ENCODE measurements at regions of chr5 and their contacts with region 1.

Region 1: DNA sequence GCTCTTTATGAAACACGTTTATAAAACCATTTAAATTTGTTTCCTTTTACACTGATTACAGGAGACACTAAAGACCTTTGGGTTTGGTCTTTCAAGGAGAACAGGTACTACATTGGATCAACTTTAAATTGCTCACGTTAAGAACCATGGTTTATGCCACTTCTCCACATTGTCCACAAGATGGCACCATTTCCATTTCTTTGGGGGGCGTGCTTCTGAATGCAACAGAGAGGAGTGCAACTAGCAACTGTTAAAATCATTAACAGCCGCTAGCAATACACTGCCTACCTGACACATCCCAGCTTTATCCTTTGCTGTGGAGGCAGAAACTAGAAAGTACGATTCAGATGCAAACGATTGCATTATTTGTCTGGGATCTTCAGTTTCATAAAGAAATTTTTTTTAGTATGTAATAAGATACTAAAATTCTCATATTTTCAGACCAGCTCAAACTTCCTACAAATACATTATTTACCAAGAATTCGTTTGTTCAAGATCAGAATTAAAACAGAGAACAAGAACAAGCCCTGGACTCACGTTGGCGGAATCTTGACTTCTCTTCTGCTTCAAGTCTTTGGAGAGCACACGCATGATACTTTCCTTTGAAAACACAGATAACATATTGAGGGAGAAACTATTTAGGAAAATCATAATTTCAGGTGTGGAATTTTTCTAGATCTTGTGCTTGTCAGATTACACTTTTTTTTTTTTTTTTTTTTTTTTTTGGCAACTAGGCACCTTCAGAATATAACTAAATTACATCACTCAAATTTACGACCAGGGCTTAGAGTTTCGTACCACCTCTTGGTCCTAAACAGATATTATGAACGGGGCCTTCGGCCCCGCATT is 702 bp downstream of the CDC20B start:
- DNase-seq: peak in 8 of 9 donors; percentile 53 to 81 (median 75)
- ATAC-seq: peak; percentile 80
- H3K4me3 ChIP-seq: peak overlapping the region; percentile 42
- H3K4me3 Mint-ChIP-seq: peak overlapping the region; percentile 78 to 93 (median 86)
- H3K27ac ChIP-seq: no peak overlapping the region
- H3K27ac Mint-ChIP-seq: peak overlapping the region in 4 of 9 donors; percentile 4 to 83 (median 57)
- H3K4me1 ChIP-seq: peaks cover 14 to 25% of the 10 kb centered on the region in 2 donors
- H3K4me1 Mint-ChIP-seq: peaks cover 23 to 45% (median 35%) of the 10 kb centered on the region in 7 donors
- H3K27me3 ChIP-seq: peaks cover 25 to 42% of the 10 kb centered on the region in 2 donors
- H3K27me3 Mint-ChIP-seq: peaks cover 73 to 88% (median 78%) of the 10 kb centered on the region in 5 donors

Region 2: DNA sequence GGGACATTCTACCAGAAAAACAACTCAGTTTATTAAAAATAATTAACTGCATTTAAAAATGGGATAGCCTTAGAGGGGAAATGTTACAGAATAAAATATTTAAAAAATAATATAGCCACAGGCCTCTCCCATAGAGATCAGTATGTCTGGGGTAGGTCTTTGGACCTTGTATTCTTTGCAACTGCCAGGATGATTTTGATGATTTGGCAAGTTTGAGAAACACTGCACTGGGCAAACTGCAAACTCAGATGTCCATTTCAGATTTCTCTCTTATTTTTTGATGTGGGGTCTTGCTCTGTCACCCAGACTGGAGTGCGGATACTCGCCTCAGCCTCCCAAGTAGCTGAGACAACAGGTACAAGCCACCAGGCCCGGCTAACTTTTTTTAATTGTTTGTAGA is 86.1 kb after region 1 on chr5:
- CTCF ChIA-PET with region 1: no interaction called
- POLR2A ChIA-PET with region 1: no interaction called
- intact Hi-C with region 1: loop called in 1 of 2 experiments (anchors 2 kb)
- DNase-seq: no peak
- ATAC-seq: no peak
- H3K4me3 ChIP-seq: no peak overlapping the region
- H3K4me3 Mint-ChIP-seq: no peak overlapping the region
- H3K27ac ChIP-seq: no peak overlapping the region
- H3K27ac Mint-ChIP-seq: no peak overlapping the region
- H3K4me1 ChIP-seq: no peaks in the 10 kb centered on the region
- H3K4me1 Mint-ChIP-seq: no peaks in the 10 kb centered on the region
- H3K27me3 ChIP-seq: no peaks in the 10 kb centered on the region
- H3K27me3 Mint-ChIP-seq: no peaks in the 10 kb centered on the region

Region 3: DNA sequence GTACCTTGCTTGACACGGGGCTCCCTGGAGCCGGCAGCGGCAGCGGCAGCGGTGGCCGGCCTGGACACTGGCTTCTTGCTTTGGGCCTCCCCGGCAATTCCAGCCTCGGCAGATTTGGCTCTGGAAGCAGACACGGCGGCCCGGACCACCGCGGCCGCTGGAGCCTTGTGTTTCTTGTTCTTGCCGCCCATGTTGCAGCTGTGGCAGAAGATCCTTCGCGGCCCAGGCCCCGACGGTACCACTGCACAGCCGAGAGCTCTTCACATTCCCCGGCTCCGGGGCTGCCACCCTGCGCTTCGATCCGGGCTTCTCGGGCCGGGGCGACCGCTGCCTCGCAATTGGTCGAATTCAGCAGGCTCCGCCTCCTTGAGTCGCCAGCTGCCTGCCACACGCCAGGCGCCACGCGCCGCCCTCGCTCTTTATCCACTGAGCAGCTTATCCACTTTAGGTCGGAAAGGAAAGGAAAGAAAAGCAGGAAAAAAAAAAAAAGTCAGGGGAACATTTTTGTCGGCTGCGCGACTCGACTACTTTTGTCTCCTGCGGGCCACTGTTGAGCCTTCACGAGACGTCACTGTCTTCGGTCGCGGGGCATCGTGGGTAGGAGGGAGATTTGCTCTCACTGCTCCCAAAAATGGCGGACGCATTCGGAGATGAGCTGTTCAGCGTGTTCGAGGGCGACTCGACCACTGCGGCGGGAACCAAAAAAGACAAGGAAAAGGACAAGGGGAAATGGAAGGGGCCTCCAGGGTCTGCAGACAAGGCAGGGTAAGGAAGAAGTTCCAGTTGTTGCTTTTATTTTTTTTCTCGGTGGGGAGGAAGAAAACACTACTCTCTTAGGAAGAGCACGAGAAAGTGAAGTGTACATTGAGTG is 135.3 kb after region 1 on chr5 and contains the starts of genes DHX29 and MTREX:
- CTCF ChIA-PET with region 1: interaction called, 7 read pairs
- POLR2A ChIA-PET with region 1: no interaction called
- intact Hi-C with region 1: loop called (anchors 1 kb)
- DNase-seq: peak; percentile 85 to 93 (median 91)
- ATAC-seq: peak; percentile 94
- H3K4me3 ChIP-seq: peak within 1 kb of the TSS; percentile 97
- H3K4me3 Mint-ChIP-seq: no peak within 1 kb of the TSS
- H3K27ac ChIP-seq: peak within 1 kb of the TSS; percentile 89
- H3K27ac Mint-ChIP-seq: no peak within 1 kb of the TSS
- H3K4me1 ChIP-seq: peaks cover 28 to 33% of the 10 kb centered on the region in 2 donors
- H3K4me1 Mint-ChIP-seq: peaks cover 15 to 34% (median 21%) of the 10 kb centered on the region in 7 donors
- H3K27me3 ChIP-seq: no peaks in the 10 kb centered on the region
- H3K27me3 Mint-ChIP-seq: no peaks in the 10 kb centered on the region
- total RNA-seq, gene DHX29: 12.5 to 19.2 (median 15.9) TPM
- total RNA-seq, gene MTREX: 64.0 to 83.7 (median 66.3) TPM

Region 4: GRCh38 chr5:55407059-55407684 is 234.9 kb after region 1 on chr5:
- CTCF ChIA-PET with region 1: no interaction called
- POLR2A ChIA-PET with region 1: no interaction called
- intact Hi-C with region 1: loop called in 1 of 2 experiments (anchors 5 kb)
- DNase-seq: peak in 6 of 9 donors; percentile 4 to 34 (median 16)
- ATAC-seq: peak; percentile 42
- H3K4me3 ChIP-seq: no peak overlapping the region
- H3K4me3 Mint-ChIP-seq: no peak overlapping the region
- H3K27ac ChIP-seq: no peak overlapping the region
- H3K27ac Mint-ChIP-seq: peak overlapping the region in 2 of 9 donors; percentile 20 to 36
- H3K4me1 ChIP-seq: no peaks in the 10 kb centered on the region
- H3K4me1 Mint-ChIP-seq: peaks cover 6 to 23% (median 12%) of the 10 kb centered on the region in 7 donors
- H3K27me3 ChIP-seq: no peaks in the 10 kb centered on the region
- H3K27me3 Mint-ChIP-seq: no peaks in the 10 kb centered on the region

Region 5: DNA sequence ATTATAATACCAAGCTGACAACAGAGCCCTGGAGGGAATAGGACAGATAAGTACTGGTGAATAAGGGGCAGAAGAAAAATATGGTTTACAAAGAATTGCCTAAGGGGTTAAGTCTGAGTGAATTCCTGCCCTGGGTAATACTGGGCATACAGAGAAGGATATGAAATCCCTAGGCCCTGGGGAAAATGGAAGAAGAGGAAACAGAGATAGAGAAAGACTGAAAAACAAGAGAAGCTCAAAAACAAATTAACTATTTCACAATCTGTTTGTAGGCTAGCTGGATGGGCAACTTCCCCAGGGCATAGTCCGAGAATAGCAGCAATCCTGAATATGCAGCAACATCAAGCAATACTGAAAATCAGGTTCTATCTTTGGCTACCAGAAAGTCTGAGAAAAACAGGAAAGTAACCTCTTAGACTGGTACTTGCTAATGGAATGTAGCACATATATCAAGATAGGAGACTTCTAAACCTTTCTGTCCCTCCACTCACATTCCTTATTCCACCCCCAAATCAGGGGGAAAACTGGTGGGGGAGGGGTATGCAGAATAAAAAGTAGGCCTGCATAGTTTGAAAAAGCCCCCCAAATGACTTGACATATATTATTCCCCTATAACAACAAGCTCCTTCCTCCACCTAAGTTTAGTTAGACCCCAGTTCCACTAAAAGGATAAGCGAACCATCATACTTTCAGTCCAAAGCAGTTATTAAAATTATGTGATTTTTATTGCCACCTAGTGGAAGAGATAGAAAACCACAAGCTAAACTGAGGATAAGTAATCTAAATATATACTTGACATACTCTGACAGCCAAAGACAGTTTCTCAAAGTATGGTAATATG is 519.2 kb after region 1 on chr5:
- CTCF ChIA-PET with region 1: interaction called, 4 read pairs
- POLR2A ChIA-PET with region 1: no interaction called
- intact Hi-C with region 1: loop called (anchors 1 kb)
- DNase-seq: peak in 6 of 9 donors; percentile 35 to 59 (median 48)
- ATAC-seq: peak; percentile 65
- H3K4me3 ChIP-seq: no peak overlapping the region
- H3K4me3 Mint-ChIP-seq: no peak overlapping the region
- H3K27ac ChIP-seq: no peak overlapping the region
- H3K27ac Mint-ChIP-seq: no peak overlapping the region
- H3K4me1 ChIP-seq: peaks cover 0 to 3% of the 10 kb centered on the region in 2 donors
- H3K4me1 Mint-ChIP-seq: peaks cover 0 to 22% (median 6%) of the 10 kb centered on the region in 7 donors
- H3K27me3 ChIP-seq: no peaks in the 10 kb centered on the region
- H3K27me3 Mint-ChIP-seq: no peaks in the 10 kb centered on the region

Region 6: DNA sequence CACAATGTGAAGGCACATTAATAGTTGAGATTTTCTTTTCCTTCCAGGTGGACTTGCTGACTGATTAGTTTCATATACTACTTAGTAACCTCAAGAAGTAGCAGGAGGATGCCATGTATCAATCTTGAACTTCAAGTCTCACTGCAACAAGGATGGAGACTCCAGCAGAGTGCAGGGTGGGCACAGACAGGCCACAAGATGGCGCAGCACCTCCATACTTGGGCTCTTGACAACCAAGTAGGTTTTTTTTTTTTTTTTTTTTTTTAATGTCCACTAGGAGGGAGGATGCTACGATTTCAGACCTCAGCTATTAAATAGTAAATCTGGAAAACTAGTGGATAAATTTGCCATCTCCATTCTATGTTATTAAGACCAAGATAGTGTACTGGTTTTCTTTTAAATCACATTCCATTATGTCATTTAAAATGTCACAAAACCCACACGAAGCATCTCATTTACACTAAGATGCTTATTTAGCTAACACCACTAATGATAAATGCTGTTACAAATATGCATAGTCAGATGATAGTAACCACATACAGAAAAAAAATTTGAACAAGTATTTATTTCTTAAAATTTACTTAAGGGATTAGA is 763.9 kb after region 1 on chr5:
- CTCF ChIA-PET with region 1: no interaction called
- POLR2A ChIA-PET with region 1: no interaction called
- intact Hi-C with region 1: loop called (anchors 1 to 2 kb)
- DNase-seq: peak; percentile 44 to 73 (median 66)
- ATAC-seq: peak; percentile 91
- H3K4me3 ChIP-seq: no peak overlapping the region
- H3K4me3 Mint-ChIP-seq: no peak overlapping the region
- H3K27ac ChIP-seq: no peak overlapping the region
- H3K27ac Mint-ChIP-seq: peak overlapping the region in 6 of 9 donors; percentile 11 to 84 (median 38)
- H3K4me1 ChIP-seq: no peaks in the 10 kb centered on the region
- H3K4me1 Mint-ChIP-seq: peaks cover 0 to 35% (median 14%) of the 10 kb centered on the region in 7 donors
- H3K27me3 ChIP-seq: no peaks in the 10 kb centered on the region
- H3K27me3 Mint-ChIP-seq: no peaks in the 10 kb centered on the region